ENCODE measurements at regions of chr5 and their contacts with region 1.

Region 1: DNA sequence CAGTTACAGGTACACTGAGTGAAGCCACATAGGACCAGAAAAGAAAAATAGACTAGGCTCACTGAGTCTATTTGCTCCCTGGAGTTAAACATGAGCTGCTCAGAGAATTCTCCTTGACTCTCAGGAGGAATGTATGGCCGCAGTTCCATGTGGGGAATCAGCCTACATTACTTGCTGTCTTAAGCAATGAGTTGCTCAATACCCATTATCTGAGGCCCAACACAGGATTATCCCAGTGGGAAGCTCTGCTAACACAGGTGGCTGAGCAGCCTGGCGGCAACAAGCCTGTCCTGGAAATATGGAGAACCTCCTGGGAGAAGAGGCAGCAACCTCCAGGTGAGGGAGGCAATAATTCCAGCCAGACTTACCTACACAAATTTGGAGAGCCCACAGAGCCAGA is 177.5 kb upstream of the NREP start:
- DNase-seq: peak; percentile 44 to 57
- H3K4me3 ChIP-seq: no peak overlapping the region
- H3K4me3 Mint-ChIP-seq: no peak overlapping the region
- H3K27ac Mint-ChIP-seq: no peak overlapping the region
- H3K4me1 ChIP-seq: no peaks in the 10 kb centered on the region
- H3K4me1 Mint-ChIP-seq: peaks cover 7% of the 10 kb centered on the region
- H3K27me3 ChIP-seq: no peaks in the 10 kb centered on the region
- H3K27me3 Mint-ChIP-seq: peaks cover 2% of the 10 kb centered on the region
- CTCF ChIP-seq: no peak

Region 2: GRCh38 chr5:111968459-111968858 is 33.9 kb after region 1 on chr5:
- CTCF ChIA-PET with region 1: no interaction called
- POLR2A ChIA-PET with region 1: no interaction called
- intact Hi-C with region 1: no loop called
- DNase-seq: no peak
- H3K4me3 ChIP-seq: no peak overlapping the region
- H3K4me3 Mint-ChIP-seq: no peak overlapping the region
- H3K27ac Mint-ChIP-seq: no peak overlapping the region
- H3K4me1 ChIP-seq: no peaks in the 10 kb centered on the region
- H3K4me1 Mint-ChIP-seq: no peaks in the 10 kb centered on the region
- H3K27me3 ChIP-seq: no peaks in the 10 kb centered on the region
- H3K27me3 Mint-ChIP-seq: peaks cover 9% of the 10 kb centered on the region
- CTCF ChIP-seq: no peak

Region 3: DNA sequence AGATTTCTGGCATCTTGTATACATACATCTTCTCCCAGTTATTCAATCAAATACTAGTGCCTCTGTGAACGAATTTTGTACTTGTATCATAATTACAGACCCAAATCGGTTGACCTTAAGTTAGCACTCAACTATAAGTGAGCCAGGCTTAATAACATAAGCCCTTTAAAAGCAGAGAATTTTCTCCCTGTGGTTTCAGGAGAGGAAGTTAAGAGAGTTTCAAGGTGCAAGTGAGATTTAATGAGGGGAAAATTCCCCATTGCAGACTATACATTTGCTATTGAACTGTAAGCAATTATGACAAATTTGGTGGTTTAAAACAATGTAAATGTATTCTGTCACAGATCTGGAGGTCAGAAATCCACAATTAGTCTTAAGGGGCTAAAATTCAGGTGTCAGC is 84.3 kb after region 1 on chr5:
- CTCF ChIA-PET with region 1: no interaction called
- POLR2A ChIA-PET with region 1: no interaction called
- intact Hi-C with region 1: loop called (anchors 1 kb)
- DNase-seq: no peak
- H3K4me3 ChIP-seq: no peak overlapping the region
- H3K4me3 Mint-ChIP-seq: no peak overlapping the region
- H3K27ac Mint-ChIP-seq: no peak overlapping the region
- H3K4me1 ChIP-seq: peaks cover 15% of the 10 kb centered on the region
- H3K4me1 Mint-ChIP-seq: peaks cover under 1% of the 10 kb centered on the region
- H3K27me3 ChIP-seq: no peaks in the 10 kb centered on the region
- H3K27me3 Mint-ChIP-seq: no peaks in the 10 kb centered on the region
- CTCF ChIP-seq: no peak

Measured in Caco-2 (cell line).